CD4-positive, alpha-beta T cell (primary cell): ENCODE measurements at regions of chr19 and their contacts with region 1.

Region 1: DNA sequence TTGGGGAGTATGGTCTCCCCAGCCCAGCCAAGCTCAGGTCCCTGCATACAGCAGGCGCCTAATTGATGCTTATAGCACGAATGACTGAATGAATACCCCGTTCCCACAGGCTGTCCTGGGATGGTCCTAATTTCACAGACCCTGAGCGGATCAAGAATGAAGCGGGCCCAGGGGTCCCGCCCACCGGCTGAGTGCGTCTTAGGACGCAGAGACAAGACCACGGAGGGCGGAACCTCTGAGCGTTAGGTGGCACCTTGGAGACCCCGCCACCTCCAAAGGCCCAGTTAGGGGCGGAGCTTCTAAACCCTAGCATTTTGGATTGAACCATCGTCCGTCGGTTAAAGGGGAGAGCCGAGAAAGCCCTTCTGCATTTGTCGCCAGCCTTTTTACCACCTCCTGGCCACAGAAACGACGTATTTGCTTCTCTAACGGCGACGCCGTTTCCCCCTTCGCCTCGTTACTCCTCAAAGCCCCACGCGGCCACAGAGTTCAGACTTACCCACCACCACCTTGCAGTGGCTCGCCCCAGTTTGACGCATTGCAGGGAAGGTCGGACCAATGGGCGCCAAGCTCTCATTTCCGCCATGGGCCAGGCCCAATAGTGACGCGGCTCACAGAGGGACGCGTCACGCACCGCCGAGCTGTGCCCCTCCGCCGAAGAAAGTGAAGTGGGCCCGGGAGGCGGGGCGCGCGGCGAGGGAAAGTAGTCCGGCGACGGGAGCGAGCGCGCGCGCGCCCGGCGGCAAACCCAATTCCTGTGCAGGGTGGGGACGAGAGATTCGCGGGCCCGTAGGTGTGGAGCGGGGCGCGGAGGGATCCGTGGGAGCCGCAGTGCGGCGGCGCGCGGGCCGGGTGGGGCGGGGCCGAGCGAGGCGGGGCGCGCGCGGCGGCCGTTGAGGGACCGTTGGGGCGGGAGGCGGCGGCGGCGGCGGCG is 479 bp upstream of the CALM3 start:
- DNase-seq: peak; percentile 96 to 99 (median 98)
- ATAC-seq: peak; percentile 87
- H3K4me3 ChIP-seq: peak overlapping the region; percentile 100
- H3K4me3 Mint-ChIP-seq: peak overlapping the region; percentile 95
- H3K27ac ChIP-seq: peak overlapping the region; percentile 100
- H3K27ac Mint-ChIP-seq: peak overlapping the region; percentile 100
- H3K4me1 ChIP-seq: peaks cover 48% of the 10 kb centered on the region
- H3K4me1 Mint-ChIP-seq: peaks cover 51% of the 10 kb centered on the region
- H3K27me3 ChIP-seq: no peaks in the 10 kb centered on the region
- H3K27me3 Mint-ChIP-seq: no peaks in the 10 kb centered on the region
- CTCF ChIP-seq: no peak

Region 2: GRCh38 chr19:46520616-46521015 is 80.0 kb before region 1 on chr19:
- CTCF ChIA-PET with region 1: no interaction called
- POLR2A ChIA-PET with region 1: interaction called, 24 read pairs
- intact Hi-C with region 1: no loop called
- DNase-seq: no peak
- ATAC-seq: no peak
- H3K4me3 ChIP-seq: no peak overlapping the region
- H3K4me3 Mint-ChIP-seq: no peak overlapping the region
- H3K27ac ChIP-seq: no peak overlapping the region
- H3K27ac Mint-ChIP-seq: peak overlapping the region; percentile 90
- H3K4me1 ChIP-seq: peaks cover 58% of the 10 kb centered on the region
- H3K4me1 Mint-ChIP-seq: peaks cover 68% of the 10 kb centered on the region
- H3K27me3 ChIP-seq: no peaks in the 10 kb centered on the region
- H3K27me3 Mint-ChIP-seq: no peaks in the 10 kb centered on the region
- CTCF ChIP-seq: no peak

Region 3: DNA sequence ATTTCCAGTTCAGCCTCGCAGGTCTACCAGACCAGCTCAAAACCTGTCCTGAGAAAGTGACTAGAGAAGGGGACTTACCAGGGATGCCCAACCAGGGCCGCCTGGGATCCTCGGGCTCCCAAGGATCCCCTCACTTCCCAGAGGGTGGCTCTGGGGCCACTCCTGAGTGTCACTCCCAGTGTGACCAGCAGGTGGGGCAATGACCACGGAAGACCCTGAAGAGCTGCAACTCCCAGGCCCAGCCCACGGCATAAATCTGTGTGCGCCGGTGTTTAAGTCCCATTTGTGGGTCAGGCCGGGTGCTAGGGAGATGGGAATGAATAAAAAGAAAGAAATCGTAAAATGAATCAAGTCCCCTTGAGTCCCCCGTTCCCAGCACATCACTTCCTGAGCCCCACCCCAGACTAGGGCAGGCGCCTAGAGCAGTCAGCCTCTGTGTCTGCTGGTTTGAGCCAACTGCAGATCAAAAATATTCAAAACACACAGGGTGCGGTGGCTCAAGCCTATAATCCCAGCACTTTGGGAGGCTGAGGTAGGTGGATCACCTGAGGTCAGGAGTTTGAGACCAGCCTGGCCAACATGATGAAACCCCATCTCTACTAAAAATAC is 13.6 kb after region 1 on chr19:
- CTCF ChIA-PET with region 1: interaction called, 14 read pairs
- POLR2A ChIA-PET with region 1: interaction called, 215 read pairs
- intact Hi-C with region 1: loop called in 1 of 2 experiments (anchors 2 kb)
- DNase-seq: peak; percentile 71 to 89 (median 77)
- ATAC-seq: peak; percentile 58
- H3K4me3 ChIP-seq: no peak overlapping the region
- H3K4me3 Mint-ChIP-seq: peak overlapping the region; percentile 56
- H3K27ac ChIP-seq: peak overlapping the region in 1 of 2 donors; percentile 41
- H3K27ac Mint-ChIP-seq: peak overlapping the region; percentile 93
- H3K4me1 ChIP-seq: peaks cover 90% of the 10 kb centered on the region
- H3K4me1 Mint-ChIP-seq: peaks cover 74% of the 10 kb centered on the region
- H3K27me3 ChIP-seq: no peaks in the 10 kb centered on the region
- H3K27me3 Mint-ChIP-seq: no peaks in the 10 kb centered on the region
- CTCF ChIP-seq: peak; percentile 90

Region 4: DNA sequence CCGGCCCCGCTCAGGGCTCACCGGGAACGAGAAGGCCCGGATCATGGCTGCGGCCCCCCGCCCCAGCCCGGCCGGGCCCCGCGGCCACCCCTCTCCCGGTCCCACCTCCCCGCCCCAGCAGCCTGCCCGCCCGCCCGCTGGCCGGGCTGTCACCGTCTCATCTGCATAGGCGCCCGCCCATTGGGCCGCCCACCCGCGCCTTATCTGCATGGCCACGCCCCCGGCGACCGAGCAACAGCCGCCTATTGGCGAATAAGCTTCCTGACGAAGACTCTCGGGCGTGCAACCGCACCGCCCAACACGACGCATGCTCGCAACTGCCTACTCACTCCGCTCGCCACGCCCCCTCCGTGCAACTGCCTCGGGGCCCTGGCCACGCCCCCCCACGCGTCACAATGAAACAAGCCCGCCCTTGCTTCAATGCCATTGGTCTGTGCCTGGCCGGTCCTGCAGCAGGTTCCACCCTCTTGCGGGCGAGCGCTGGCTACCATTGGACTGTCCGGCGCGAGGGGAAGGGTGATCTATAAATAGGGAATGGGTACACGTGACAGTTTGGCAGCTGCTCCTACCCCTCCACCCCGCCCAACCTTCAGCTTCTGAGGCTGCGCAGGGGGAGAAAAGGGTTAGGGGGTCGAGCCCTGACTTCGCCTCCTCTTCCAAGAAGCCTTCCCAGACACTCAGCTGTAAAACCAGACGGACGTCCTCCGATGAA is 60.5 kb after region 1 on chr19 and contains the start of gene DACT3:
- CTCF ChIA-PET with region 1: interaction called, 33 read pairs
- POLR2A ChIA-PET with region 1: interaction called, 44 read pairs
- intact Hi-C with region 1: loop called in 1 of 2 experiments (anchors 1 kb)
- DNase-seq: peak; percentile 99 to 100 (median 100)
- ATAC-seq: peak; percentile 86
- H3K4me3 ChIP-seq: peak within 1 kb of the TSS; percentile 61
- H3K4me3 Mint-ChIP-seq: peak within 1 kb of the TSS; percentile 85
- H3K27ac ChIP-seq: peak within 1 kb of the TSS; percentile 38 to 44
- H3K27ac Mint-ChIP-seq: peak within 1 kb of the TSS; percentile 88
- H3K4me1 ChIP-seq: peaks cover 32% of the 10 kb centered on the region
- H3K4me1 Mint-ChIP-seq: peaks cover 20% of the 10 kb centered on the region
- H3K27me3 ChIP-seq: peaks cover 24 to 26% of the 10 kb centered on the region in 2 experiments
- H3K27me3 Mint-ChIP-seq: peaks cover 24% of the 10 kb centered on the region
- CTCF ChIP-seq: no peak
- total RNA-seq, gene DACT3: 0.11 TPM

Region 5: GRCh38 chr19:46704379-46705076 is 103.9 kb after region 1 on chr19:
- CTCF ChIA-PET with region 1: no interaction called
- POLR2A ChIA-PET with region 1: no interaction called
- intact Hi-C with region 1: no loop called
- DNase-seq: peak; percentile 72 to 95 (median 88)
- ATAC-seq: peak; percentile 99
- H3K4me3 ChIP-seq: no peak overlapping the region
- H3K4me3 Mint-ChIP-seq: no peak overlapping the region
- H3K27ac ChIP-seq: no peak overlapping the region
- H3K27ac Mint-ChIP-seq: peak overlapping the region; percentile 61
- H3K4me1 ChIP-seq: peaks cover 13% of the 10 kb centered on the region
- H3K4me1 Mint-ChIP-seq: peaks cover 15% of the 10 kb centered on the region
- H3K27me3 ChIP-seq: no peaks in the 10 kb centered on the region
- H3K27me3 Mint-ChIP-seq: no peaks in the 10 kb centered on the region
- CTCF ChIP-seq: peak; percentile 97

Region 6: GRCh38 chr19:46746281-46747013 is 145.8 kb after region 1 on chr19 and contains the start of gene STRN4:
- CTCF ChIA-PET with region 1: no interaction called
- POLR2A ChIA-PET with region 1: interaction called, 6 read pairs
- intact Hi-C with region 1: loop called in 1 of 2 experiments (anchors 5 kb)
- DNase-seq: peak; percentile 30 to 87 (median 54)
- ATAC-seq: peak; percentile 69
- H3K4me3 ChIP-seq: peak within 1 kb of the TSS; percentile 78
- H3K4me3 Mint-ChIP-seq: peak within 1 kb of the TSS; percentile 94
- H3K27ac ChIP-seq: peak within 1 kb of the TSS; percentile 9 to 29
- H3K27ac Mint-ChIP-seq: peak within 1 kb of the TSS; percentile 87
- H3K4me1 ChIP-seq: peaks cover 42% of the 10 kb centered on the region
- H3K4me1 Mint-ChIP-seq: peaks cover 55% of the 10 kb centered on the region
- H3K27me3 ChIP-seq: no peaks in the 10 kb centered on the region
- H3K27me3 Mint-ChIP-seq: no peaks in the 10 kb centered on the region
- CTCF ChIP-seq: no peak
- total RNA-seq, gene STRN4: 90.0 to 94.0 TPM

Region 7: GRCh38 chr19:47035127-47036096 is 434.8 kb after region 1 on chr19:
- CTCF ChIA-PET with region 1: no interaction called
- POLR2A ChIA-PET with region 1: no interaction called
- intact Hi-C with region 1: loop called in 1 of 2 experiments (anchors 10 kb)
- DNase-seq: peak; percentile 88 to 99 (median 95)
- ATAC-seq: peak; percentile 96
- H3K4me3 ChIP-seq: peak overlapping the region; percentile 51
- H3K4me3 Mint-ChIP-seq: peak overlapping the region; percentile 94
- H3K27ac ChIP-seq: no peak overlapping the region
- H3K27ac Mint-ChIP-seq: peak overlapping the region; percentile 85
- H3K4me1 ChIP-seq: peaks cover 30% of the 10 kb centered on the region
- H3K4me1 Mint-ChIP-seq: peaks cover 15% of the 10 kb centered on the region
- H3K27me3 ChIP-seq: peaks cover 4 to 5% of the 10 kb centered on the region in 2 experiments
- H3K27me3 Mint-ChIP-seq: peaks cover 23% of the 10 kb centered on the region
- CTCF ChIP-seq: peak; percentile 98